ENCODE measurements at regions of chr9 and their contacts with region 1.

Region 1: DNA sequence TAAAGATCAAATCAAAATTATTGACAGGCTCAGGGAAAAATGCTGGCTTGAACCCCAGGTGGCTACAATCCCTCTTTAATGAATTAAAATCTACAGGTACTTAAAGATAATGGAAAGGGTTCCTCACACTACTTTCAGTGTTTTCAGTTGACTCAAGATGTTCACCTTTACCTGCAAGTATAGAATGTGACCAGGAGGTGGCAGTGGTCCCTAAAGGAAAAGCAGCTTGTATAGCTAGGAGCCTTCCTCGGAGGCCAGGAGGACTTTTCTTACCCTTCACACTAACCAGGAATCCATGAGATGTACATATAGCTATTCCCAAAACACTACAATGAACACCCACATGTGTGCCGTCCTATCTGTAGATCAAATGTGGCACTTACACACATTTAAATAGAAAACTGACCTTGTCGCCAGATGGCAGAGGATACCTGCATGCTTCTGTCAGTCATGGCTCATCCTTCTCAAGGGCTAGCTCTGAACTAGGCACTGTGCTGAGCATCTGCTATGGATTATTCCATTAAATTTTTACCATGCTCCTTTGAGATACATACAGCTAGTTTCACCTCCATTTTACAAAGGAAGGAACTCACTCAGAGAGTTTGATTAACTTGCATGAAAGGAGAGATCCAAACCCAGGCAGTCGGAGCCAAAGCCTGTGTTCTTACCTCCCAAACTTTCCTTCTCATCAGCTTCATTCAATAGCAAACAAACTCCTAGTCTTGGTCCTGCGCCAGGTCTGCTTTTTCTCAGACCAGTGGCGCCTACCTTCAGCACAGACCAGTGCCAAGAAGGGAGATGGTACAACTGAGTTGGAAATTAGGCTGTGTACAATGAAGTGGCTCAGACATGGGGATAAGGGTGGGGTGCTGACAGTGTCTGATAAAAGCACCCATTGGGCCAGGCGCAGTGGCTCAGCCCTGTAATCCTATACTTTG is 24.5 kb downstream of the C9orf152 start:
- DNase-seq: peak in 4 of 5 donors; percentile 37 to 70 (median 43)
- H3K4me3 ChIP-seq: no peak overlapping the region
- H3K27ac ChIP-seq: no peak overlapping the region
- H3K4me1 ChIP-seq: no peaks in the 10 kb centered on the region
- H3K27me3 ChIP-seq: no peaks in the 10 kb centered on the region
- CTCF ChIP-seq: peak; percentile 38 to 66 (median 52)
- EP300 ChIP-seq: no peak
- POLR2A ChIP-seq: no peak

Region 2: DNA sequence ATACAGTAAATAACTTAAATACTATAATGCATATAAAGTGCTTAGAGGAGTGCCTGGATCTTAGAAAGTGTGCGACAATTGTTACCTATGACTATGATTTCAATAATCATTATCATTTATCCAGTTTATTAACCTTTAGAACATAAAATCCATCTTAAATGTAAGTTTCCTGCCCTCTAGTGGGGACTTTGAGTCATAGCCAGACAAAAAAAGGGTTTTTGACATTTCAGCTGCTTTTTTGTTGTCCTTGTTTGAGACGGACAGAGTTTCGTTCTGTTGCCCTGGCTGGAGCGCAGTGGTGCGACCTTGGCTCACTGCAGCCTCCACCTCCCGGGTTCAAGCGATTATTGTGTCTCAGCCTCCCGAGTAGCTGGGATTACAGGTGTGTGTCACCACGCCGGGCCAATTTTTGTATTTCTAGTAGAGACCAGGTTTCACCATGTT is 34.2 kb after region 1 on chr9:
- intact Hi-C with region 1: loop called in 1 of 4 experiments (anchors 5 kb)
- DNase-seq: no peak
- H3K4me3 ChIP-seq: no peak overlapping the region
- H3K27ac ChIP-seq: no peak overlapping the region
- H3K4me1 ChIP-seq: no peaks in the 10 kb centered on the region
- H3K27me3 ChIP-seq: no peaks in the 10 kb centered on the region
- CTCF ChIP-seq: peak; percentile 57 to 76 (median 60)
- EP300 ChIP-seq: no peak
- POLR2A ChIP-seq: no peak

Region 3: DNA sequence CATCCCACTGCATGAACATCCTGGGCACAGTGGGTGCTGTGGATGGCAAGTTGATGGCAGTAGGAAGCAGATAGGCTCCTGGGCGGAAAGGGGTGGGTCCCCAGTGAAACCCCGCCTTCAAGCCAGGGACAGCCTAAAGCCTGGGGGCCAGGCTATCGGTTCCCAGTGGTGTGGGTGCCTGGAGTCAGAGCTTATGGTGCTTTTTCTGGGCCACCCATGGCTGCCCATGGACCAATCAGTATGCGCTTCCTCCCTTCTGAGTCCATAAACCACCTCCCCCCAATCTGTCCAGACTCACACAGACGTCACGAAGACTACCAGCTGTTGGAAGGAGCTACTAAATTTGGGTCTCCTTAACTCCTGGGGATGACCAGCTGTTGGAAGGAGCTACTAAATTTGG is 1318.2 kb after region 1 on chr9:
- intact Hi-C with region 1: no loop called
- DNase-seq: no peak
- H3K4me3 ChIP-seq: no peak overlapping the region
- H3K27ac ChIP-seq: no peak overlapping the region
- H3K4me1 ChIP-seq: no peaks in the 10 kb centered on the region
- H3K27me3 ChIP-seq: no peaks in the 10 kb centered on the region
- CTCF ChIP-seq: no peak
- EP300 ChIP-seq: no peak
- POLR2A ChIP-seq: no peak